Activated CD4-positive, alpha-beta T cell treated with anti-CD3 and anti-CD28 coated beads for 36 hours (primary cell): ENCODE measurements at regions of chr11 and their contacts with region 1.

Region 1: GRCh38 chr11:64304316-64305072 is 830 bp upstream of the ESRRA start:
- DNase-seq: peak; percentile 99
- ATAC-seq: peak; percentile 49
- H3K4me3 Mint-ChIP-seq: peak overlapping the region; percentile 100
- H3K27ac Mint-ChIP-seq: peak overlapping the region; percentile 95
- H3K4me1 Mint-ChIP-seq: peaks cover 34% of the 10 kb centered on the region
- H3K27me3 Mint-ChIP-seq: peaks cover 14% of the 10 kb centered on the region

Region 2: DNA sequence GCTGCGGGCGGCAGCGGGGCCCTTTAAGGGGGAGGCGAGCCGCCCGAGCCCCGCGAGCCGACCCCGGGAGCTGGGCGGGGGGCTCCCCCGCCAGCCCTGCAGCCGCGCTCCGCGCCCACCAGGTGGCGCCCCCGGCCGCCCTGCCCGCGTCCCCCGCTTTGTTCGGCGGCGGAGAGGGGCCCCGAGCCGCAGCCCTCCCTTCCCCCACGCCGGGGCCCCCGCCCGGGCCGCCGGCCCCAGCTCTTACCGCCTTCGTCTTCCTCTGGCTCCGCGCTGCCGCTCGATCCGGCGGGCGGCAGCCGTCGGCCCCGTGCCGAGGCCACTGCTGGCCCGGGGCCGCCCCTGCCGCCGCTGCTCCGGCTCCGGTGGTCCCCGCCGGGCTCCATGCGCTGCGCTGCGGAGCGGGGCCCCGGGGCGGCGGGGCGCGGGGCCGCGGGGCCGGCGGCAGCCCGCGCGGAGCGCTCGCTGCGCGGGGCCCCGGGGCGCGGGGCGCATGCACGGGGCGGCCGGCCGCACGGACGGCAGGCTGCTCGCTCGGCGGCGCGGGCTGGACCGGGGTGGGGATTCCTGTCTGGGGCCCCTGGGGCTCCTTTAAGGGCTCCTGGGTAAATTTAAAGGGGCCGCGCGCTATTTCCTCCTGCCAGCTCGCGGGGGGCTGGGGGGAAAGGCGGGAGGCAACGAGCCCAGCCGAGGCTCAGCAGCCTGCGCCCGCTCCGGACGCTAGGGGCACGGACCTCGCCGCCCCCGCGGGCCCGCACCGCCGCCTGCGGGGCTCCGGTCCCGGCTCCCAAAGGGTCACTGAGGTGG is 536.1 kb before region 1 on chr11 and contains the start of gene ZFTA:
- CTCF ChIA-PET with region 1: interaction called, 3 read pairs
- POLR2A ChIA-PET with region 1: no interaction called
- intact Hi-C with region 1: loop called in 1 of 2 experiments (anchors 5 kb)
- DNase-seq: peak; percentile 77
- ATAC-seq: peak; percentile 58
- H3K4me3 Mint-ChIP-seq: peak within 1 kb of the TSS; percentile 96
- H3K27ac Mint-ChIP-seq: peak within 1 kb of the TSS; percentile 78
- H3K4me1 Mint-ChIP-seq: peaks cover 6% of the 10 kb centered on the region
- H3K27me3 Mint-ChIP-seq: peaks cover 20% of the 10 kb centered on the region
- total RNA-seq, gene ZFTA: 1.5 to 1.7 TPM

Region 3: DNA sequence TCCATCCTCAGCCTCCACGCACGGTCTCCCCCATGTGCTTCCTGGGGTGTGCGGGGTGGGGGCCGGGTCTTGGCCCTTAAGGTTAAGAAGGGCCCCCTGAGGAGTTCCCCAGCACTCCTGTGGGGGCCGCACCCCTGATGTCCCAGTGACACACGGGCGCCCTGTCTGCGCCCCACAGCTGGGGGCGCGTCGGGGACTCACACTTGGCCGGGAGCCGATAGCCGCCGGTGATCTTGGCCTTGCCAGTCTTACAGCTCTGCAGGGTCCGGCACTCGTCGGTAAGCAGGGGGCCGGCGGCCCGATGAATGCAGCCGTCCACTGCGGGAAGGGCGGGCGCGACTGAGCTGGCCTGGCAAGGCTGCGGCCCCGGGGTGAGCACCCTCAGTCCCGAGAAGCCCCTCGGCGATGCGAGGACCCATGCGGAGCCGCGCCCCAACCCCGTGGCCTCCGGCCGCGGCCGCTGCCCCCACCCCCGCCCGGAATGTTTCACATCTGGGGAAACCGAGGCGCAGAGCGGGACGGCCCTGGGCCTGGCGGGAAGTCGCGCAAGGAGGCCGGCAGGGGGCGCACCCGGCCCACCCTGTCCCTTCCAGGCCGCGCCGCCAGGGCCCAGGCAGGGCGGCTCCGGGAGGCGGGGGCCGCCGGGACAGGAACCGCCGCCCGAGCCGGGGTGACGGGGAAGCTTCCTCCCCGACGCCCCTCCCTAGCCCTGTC is 304.3 kb before region 1 on chr11:
- CTCF ChIA-PET with region 1: no interaction called
- POLR2A ChIA-PET with region 1: no interaction called
- intact Hi-C with region 1: loop called in 1 of 2 experiments (anchors 1 kb)
- DNase-seq: peak; percentile 86
- ATAC-seq: peak; percentile 81
- H3K4me3 Mint-ChIP-seq: no peak overlapping the region
- H3K27ac Mint-ChIP-seq: no peak overlapping the region
- H3K4me1 Mint-ChIP-seq: peaks cover 3% of the 10 kb centered on the region
- H3K27me3 Mint-ChIP-seq: peaks cover 2% of the 10 kb centered on the region

Region 4: GRCh38 chr11:64173616-64174355 is 130.7 kb before region 1 on chr11:
- CTCF ChIA-PET with region 1: no interaction called
- POLR2A ChIA-PET with region 1: no interaction called
- intact Hi-C with region 1: no loop called
- DNase-seq: no peak
- ATAC-seq: no peak
- H3K4me3 Mint-ChIP-seq: no peak overlapping the region
- H3K27ac Mint-ChIP-seq: peak overlapping the region; percentile 31
- H3K4me1 Mint-ChIP-seq: peaks cover 19% of the 10 kb centered on the region
- H3K27me3 Mint-ChIP-seq: no peaks in the 10 kb centered on the region

Region 5: GRCh38 chr11:64225612-64226506 is 78.6 kb before region 1 on chr11 and contains the starts of genes NUDT22 and TRPT1:
- CTCF ChIA-PET with region 1: interaction called, 6 read pairs
- POLR2A ChIA-PET with region 1: interaction called, 3 read pairs
- intact Hi-C with region 1: loop called in 1 of 2 experiments (anchors 1 kb)
- DNase-seq: peak; percentile 96
- ATAC-seq: peak; percentile 72
- H3K4me3 Mint-ChIP-seq: peak within 1 kb of the TSS; percentile 87
- H3K27ac Mint-ChIP-seq: peak within 1 kb of the TSS; percentile 85
- H3K4me1 Mint-ChIP-seq: peaks cover 32% of the 10 kb centered on the region
- H3K27me3 Mint-ChIP-seq: no peaks in the 10 kb centered on the region
- total RNA-seq, gene NUDT22: 61.8 to 74.1 TPM
- total RNA-seq, gene TRPT1: 23.9 to 27.1 TPM

Region 6: DNA sequence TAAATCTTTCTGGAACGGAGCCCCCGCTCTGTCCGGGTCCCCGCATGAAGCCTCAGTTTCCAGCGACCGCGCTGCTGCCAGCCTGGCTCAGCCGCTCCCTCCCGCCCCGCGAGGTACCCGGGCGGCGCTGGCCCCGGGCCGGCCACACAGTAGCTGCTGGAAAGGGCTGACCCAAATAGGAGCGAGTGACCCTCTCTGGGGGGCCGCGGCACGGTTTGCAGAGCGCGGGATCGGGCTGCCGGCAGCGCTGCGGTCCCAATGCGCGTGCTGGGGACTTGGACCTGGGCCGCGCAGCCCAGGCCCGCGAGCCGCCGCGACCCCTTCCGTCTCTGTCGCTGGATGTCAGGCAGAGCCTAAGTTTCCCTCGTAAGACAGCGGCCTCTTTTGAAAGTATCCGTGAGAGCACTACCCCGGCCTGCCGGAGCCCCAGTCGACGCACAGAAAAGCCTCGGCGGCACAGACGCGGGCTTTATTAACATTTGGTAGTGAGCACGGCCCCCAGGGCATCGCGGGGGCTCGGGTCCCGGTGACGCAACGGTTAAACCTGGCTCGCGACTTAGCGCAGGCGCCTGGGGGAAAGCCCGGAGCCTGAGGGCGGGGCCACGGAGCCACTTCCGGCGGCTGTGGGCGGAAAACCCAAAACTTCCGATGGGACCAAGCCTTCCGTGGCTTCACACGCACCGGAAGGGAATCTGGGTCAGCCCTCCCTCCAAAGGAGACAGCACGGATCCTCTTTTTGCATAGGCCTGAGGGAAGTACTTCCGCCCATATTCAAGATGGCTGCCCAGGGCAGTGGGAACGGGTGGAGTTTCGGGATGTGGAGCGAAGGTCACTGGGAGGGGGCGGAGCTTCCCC is 34.9 kb before region 1 on chr11:
- CTCF ChIA-PET with region 1: interaction called, 55 read pairs
- POLR2A ChIA-PET with region 1: interaction called, 10 read pairs
- intact Hi-C with region 1: loop called (anchors 1 kb)
- DNase-seq: peak; percentile 98
- ATAC-seq: peak; percentile 82
- H3K4me3 Mint-ChIP-seq: peak overlapping the region; percentile 98
- H3K27ac Mint-ChIP-seq: peak overlapping the region; percentile 96
- H3K4me1 Mint-ChIP-seq: peaks cover 19% of the 10 kb centered on the region
- H3K27me3 Mint-ChIP-seq: no peaks in the 10 kb centered on the region

Region 7: DNA sequence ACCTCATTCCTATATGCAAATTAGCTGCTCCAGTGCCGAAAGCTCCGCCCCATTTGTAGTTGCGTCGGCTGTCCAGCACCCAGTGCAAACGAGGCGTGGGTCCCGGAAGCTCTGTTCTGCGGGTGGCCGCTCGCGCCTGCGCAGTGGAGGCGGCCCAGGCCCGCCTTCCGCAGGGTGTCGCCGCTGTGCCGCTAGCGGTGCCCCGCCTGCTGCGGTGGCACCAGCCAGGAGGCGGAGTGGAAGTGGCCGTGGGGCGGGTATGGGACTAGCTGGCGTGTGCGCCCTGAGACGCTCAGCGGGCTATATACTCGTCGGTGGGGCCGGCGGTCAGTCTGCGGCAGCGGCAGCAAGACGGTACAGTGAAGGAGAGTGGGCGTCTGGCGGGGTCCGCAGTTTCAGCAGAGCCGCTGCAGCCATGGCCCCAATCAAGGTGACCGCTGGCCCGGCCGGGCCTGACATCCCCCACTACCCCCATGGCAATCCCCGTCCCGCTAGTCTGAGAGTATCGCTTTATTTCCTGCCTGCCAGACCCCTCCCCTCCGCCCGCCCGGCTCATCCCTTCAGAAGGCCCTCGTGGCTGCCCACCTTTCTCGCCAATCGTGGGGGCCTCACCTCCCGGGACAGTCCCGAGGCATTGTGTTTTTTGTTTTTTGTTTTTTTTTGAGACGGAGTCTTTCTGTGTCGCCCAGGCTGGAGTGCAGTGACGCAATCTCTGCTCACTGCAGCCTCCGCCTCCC is 13.6 kb after region 1 on chr11 and contains the start of gene PRDX5:
- CTCF ChIA-PET with region 1: interaction called, 36 read pairs
- POLR2A ChIA-PET with region 1: interaction called, 13 read pairs
- intact Hi-C with region 1: loop called (anchors 1 kb)
- DNase-seq: peak; percentile 97
- ATAC-seq: peak; percentile 84
- H3K4me3 Mint-ChIP-seq: peak within 1 kb of the TSS; percentile 97
- H3K27ac Mint-ChIP-seq: peak within 1 kb of the TSS; percentile 99
- H3K4me1 Mint-ChIP-seq: peaks cover 26% of the 10 kb centered on the region
- H3K27me3 Mint-ChIP-seq: no peaks in the 10 kb centered on the region
- total RNA-seq, gene PRDX5: 110 to 142 TPM